Calu3 (cell line): ENCODE measurements at regions of chr16 and their contacts with region 1.

Region 1: GRCh38 chr16:25013751-25014499 is 1.2 kb downstream of the ARHGAP17 start:
- DNase-seq: no peak
- H3K4me3 Mint-ChIP-seq: peak overlapping the region; percentile 92
- H3K27ac Mint-ChIP-seq: peak overlapping the region; percentile 87
- H3K4me1 Mint-ChIP-seq: peaks cover 25% of the 10 kb centered on the region
- H3K27me3 Mint-ChIP-seq: no peaks in the 10 kb centered on the region
- CTCF ChIP-seq: no peak

Region 2: GRCh38 chr16:24993722-24994686 is 19.9 kb before region 1 on chr16:
- CTCF ChIA-PET with region 1: interaction called, 6 read pairs
- intact Hi-C with region 1: loop called (anchors 2 kb)
- DNase-seq: peak; percentile 50
- H3K4me3 Mint-ChIP-seq: no peak overlapping the region
- H3K27ac Mint-ChIP-seq: peak overlapping the region; percentile 22
- H3K4me1 Mint-ChIP-seq: peaks cover 63% of the 10 kb centered on the region
- H3K27me3 Mint-ChIP-seq: no peaks in the 10 kb centered on the region
- CTCF ChIP-seq: no peak